Transverse colon (tissue), 4 donors: ENCODE measurements at regions of chr20 and their contacts with region 1.

Region 1: GRCh38 chr20:3209257-3209945 is at the start of gene ITPA:
- DNase-seq: peak; percentile 56
- H3K4me3 ChIP-seq: peak within 1 kb of the TSS; percentile 73 to 85 (median 79)
- H3K27ac ChIP-seq: peak within 1 kb of the TSS; percentile 82 to 90 (median 86)
- H3K4me1 ChIP-seq: peaks cover 0 to 19% (median 15%) of the 10 kb centered on the region in 4 donors
- H3K27me3 ChIP-seq: no peaks in the 10 kb centered on the region
- CTCF ChIP-seq: peak in 1 of 5 experiments; percentile 13
- EP300 ChIP-seq: no peak
- POLR2A ChIP-seq: peak; percentile 15
- total RNA-seq, gene ITPA: 15.0 to 95.7 (median 39.6) TPM

Region 2: GRCh38 chr20:2879146-2879545 is 330.3 kb before region 1 on chr20:
- in situ Hi-C with region 1: no loop called
- intact Hi-C with region 1: no loop called
- DNase-seq: no peak
- H3K4me3 ChIP-seq: no peak overlapping the region
- H3K27ac ChIP-seq: no peak overlapping the region
- H3K4me1 ChIP-seq: peaks cover 0 to 49% (median 13%) of the 10 kb centered on the region in 4 donors
- H3K27me3 ChIP-seq: no peaks in the 10 kb centered on the region
- CTCF ChIP-seq: no peak
- EP300 ChIP-seq: no peak
- POLR2A ChIP-seq: no peak

Region 3: DNA sequence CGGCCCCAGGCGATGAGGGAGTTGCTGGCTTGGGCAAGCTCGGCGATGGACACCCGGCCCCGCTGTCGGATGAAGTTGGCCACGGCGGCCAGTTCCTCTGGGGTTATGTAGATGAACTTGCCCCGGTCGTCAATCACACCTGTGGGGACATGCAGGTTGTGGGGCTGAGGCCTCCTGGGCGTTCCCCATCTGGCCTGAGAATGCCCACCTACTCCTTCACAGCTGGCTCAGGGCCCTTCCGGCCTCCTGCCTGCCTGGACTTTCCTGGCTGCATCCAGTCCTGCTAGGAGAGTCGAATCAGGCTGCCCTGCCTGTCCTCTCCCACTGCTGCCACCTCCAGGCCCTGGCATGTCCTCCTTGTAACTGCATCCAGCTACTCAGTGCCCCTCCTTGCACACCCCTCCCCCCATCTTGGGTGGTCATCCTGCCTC is 18.7 kb before region 1 on chr20:
- in situ Hi-C with region 1: no loop called
- intact Hi-C with region 1: no loop called
- DNase-seq: no peak
- H3K4me3 ChIP-seq: no peak overlapping the region
- H3K27ac ChIP-seq: no peak overlapping the region
- H3K4me1 ChIP-seq: no peaks in the 10 kb centered on the region
- H3K27me3 ChIP-seq: no peaks in the 10 kb centered on the region
- CTCF ChIP-seq: no peak
- EP300 ChIP-seq: no peak
- POLR2A ChIP-seq: no peak

Region 4: GRCh38 chr20:3248167-3248992 is 39.0 kb after region 1 on chr20:
- in situ Hi-C with region 1: no loop called
- intact Hi-C with region 1: no loop called
- DNase-seq: no peak
- H3K4me3 ChIP-seq: peak overlapping the region in 1 of 4 donors; percentile 6
- H3K27ac ChIP-seq: no peak overlapping the region
- H3K4me1 ChIP-seq: peaks cover 3 to 11% (median 8%) of the 10 kb centered on the region in 4 donors
- H3K27me3 ChIP-seq: peaks cover 58% of the 10 kb centered on the region
- CTCF ChIP-seq: no peak
- EP300 ChIP-seq: no peak
- POLR2A ChIP-seq: no peak

Region 5: DNA sequence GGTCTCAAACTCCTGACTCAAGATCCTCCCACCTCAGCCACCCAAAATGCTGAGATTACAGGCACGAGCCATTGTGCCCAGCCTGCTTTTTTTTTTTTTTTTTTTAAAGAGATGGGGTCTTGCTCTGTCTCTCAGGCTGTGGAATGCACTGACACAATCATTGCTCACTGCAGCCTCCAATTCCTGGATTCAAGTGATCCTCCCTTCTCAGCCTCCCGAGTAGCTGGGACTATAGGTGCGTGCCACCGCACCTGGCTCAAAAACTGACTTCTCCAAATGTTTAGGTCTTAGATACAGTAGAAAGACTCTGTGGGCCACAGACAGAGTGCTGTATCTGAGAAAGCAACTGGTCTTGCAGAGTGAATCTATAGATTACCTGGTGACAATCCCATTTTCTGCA is 60.6 kb after region 1 on chr20:
- in situ Hi-C with region 1: no loop called
- intact Hi-C with region 1: no loop called
- DNase-seq: no peak
- H3K4me3 ChIP-seq: no peak overlapping the region
- H3K27ac ChIP-seq: no peak overlapping the region
- H3K4me1 ChIP-seq: no peaks in the 10 kb centered on the region
- H3K27me3 ChIP-seq: no peaks in the 10 kb centered on the region
- CTCF ChIP-seq: no peak
- EP300 ChIP-seq: no peak
- POLR2A ChIP-seq: no peak

Region 6: DNA sequence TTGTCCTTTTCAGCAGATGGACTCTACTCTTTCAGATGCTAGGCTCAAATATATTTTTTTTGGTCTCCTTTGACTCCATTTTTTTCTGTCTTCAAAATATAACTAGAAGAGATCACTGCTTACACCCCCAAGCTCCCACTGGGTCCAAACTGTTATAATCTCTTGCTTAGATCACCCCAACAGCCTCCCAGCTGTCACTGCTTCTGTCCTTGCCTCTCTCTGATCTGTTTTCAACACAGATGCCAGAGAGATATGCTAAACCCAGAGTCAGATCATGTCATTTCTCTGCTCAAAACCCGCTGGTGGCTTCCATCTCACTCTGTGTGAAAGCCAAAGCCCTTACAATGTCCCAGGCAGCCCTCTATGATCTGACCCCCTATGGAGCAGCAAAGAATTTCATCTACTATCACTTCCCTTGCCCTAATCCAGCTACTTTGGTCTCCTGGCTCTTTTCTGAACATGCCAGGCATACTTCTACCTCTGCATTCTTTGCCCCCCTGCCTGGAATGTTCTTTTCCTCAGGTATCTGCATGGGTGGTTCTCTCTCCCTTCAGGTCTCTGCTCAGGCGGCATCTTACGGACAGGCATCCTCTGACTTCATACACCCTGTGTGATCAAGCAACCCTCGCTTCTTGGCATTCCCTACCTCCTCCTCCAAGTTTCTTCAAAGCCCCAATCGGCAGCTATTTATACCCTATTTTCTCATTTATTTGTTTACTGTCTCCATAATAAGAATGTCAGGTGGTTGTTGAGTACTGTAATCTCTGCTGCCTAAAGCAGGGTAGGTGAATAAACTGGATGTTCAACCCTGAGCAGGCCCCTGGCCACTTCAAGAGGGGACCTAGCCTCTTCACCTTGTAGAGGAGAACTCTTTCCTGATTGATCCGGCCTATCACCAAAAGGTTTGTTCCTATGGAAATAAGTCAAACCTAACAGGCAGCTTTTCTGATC is 73.1 kb after region 1 on chr20:
- in situ Hi-C with region 1: no loop called
- intact Hi-C with region 1: loop called (anchors 1 kb)
- DNase-seq: no peak
- H3K4me3 ChIP-seq: no peak overlapping the region
- H3K27ac ChIP-seq: no peak overlapping the region
- H3K4me1 ChIP-seq: no peaks in the 10 kb centered on the region
- H3K27me3 ChIP-seq: no peaks in the 10 kb centered on the region
- CTCF ChIP-seq: no peak
- EP300 ChIP-seq: no peak
- POLR2A ChIP-seq: no peak